CD4-positive, alpha-beta T cell (primary cell): ENCODE measurements at regions of chr11 and their contacts with region 1.

Region 1: DNA sequence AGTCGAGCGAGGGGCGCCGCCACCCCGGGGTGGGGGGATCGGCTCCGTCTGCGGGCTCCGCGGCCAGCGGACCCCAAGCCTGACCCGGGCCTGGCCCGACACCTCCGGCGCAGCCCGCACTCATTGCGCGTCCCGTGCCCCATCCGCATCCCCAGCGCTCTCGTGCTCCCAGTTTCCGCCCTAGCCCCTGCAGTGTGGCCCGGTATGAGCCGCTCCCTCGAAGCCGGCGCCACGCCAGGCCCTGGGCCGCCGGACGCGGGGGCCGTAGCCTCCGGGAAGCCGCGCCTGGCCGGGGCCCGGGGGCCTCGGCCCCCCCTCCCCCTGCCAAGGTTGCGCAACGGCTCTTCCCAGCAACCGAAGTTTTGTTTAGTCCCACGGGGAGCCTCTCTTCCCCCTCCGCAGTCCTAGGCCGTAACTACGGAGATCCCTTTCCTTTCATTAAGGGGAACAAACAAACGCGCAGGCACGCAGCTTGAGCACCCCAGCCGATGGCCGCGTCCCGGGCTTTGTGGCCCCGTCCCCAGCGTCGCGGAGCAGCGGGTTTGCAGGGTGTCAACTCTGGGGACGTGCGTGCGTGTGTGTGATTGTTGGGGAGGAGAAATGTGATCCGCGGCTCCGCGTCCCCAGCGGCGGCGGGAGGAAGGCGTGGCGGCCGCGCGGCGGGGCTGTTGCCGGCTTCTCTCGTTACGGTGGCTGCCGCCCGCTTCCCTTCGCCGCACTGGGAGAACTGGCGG is 883 bp downstream of the HIPK3 start:
- DNase-seq: peak; percentile 58 to 89 (median 71)
- ATAC-seq: peak; percentile 68
- H3K4me3 ChIP-seq: peak overlapping the region; percentile 88
- H3K4me3 Mint-ChIP-seq: peak overlapping the region; percentile 97
- H3K27ac ChIP-seq: peak overlapping the region; percentile 94 to 97
- H3K27ac Mint-ChIP-seq: peak overlapping the region; percentile 94
- H3K4me1 ChIP-seq: peaks cover 15% of the 10 kb centered on the region
- H3K4me1 Mint-ChIP-seq: peaks cover 55% of the 10 kb centered on the region
- H3K27me3 ChIP-seq: no peaks in the 10 kb centered on the region
- H3K27me3 Mint-ChIP-seq: no peaks in the 10 kb centered on the region
- CTCF ChIP-seq: no peak

Region 2: GRCh38 chr11:32583459-32584271 is 674.4 kb before region 1 on chr11 and contains the start of gene EIF3M:
- CTCF ChIA-PET with region 1: no interaction called
- POLR2A ChIA-PET with region 1: interaction called, 3 read pairs
- intact Hi-C with region 1: loop called in 1 of 2 experiments (anchors 5 kb)
- DNase-seq: peak; percentile 92 to 98 (median 95)
- ATAC-seq: peak; percentile 98
- H3K4me3 ChIP-seq: peak within 1 kb of the TSS; percentile 89
- H3K4me3 Mint-ChIP-seq: peak within 1 kb of the TSS; percentile 94
- H3K27ac ChIP-seq: peak within 1 kb of the TSS; percentile 84 to 87
- H3K27ac Mint-ChIP-seq: peak within 1 kb of the TSS; percentile 94
- H3K4me1 ChIP-seq: peaks cover 38% of the 10 kb centered on the region
- H3K4me1 Mint-ChIP-seq: peaks cover 52% of the 10 kb centered on the region
- H3K27me3 ChIP-seq: no peaks in the 10 kb centered on the region
- H3K27me3 Mint-ChIP-seq: no peaks in the 10 kb centered on the region
- CTCF ChIP-seq: no peak
- total RNA-seq, gene EIF3M: 260 to 264 TPM

Region 3: GRCh38 chr11:33273656-33274055 is 15.6 kb after region 1 on chr11:
- CTCF ChIA-PET with region 1: interaction called, 5 read pairs
- POLR2A ChIA-PET with region 1: interaction called, 3 read pairs
- intact Hi-C with region 1: loop called in 1 of 2 experiments (anchors 2 kb)
- DNase-seq: no peak
- ATAC-seq: no peak
- H3K4me3 ChIP-seq: no peak overlapping the region
- H3K4me3 Mint-ChIP-seq: no peak overlapping the region
- H3K27ac ChIP-seq: no peak overlapping the region
- H3K27ac Mint-ChIP-seq: no peak overlapping the region
- H3K4me1 ChIP-seq: peaks cover 17% of the 10 kb centered on the region
- H3K4me1 Mint-ChIP-seq: peaks cover 65% of the 10 kb centered on the region
- H3K27me3 ChIP-seq: no peaks in the 10 kb centered on the region
- H3K27me3 Mint-ChIP-seq: no peaks in the 10 kb centered on the region
- CTCF ChIP-seq: no peak

Region 4: DNA sequence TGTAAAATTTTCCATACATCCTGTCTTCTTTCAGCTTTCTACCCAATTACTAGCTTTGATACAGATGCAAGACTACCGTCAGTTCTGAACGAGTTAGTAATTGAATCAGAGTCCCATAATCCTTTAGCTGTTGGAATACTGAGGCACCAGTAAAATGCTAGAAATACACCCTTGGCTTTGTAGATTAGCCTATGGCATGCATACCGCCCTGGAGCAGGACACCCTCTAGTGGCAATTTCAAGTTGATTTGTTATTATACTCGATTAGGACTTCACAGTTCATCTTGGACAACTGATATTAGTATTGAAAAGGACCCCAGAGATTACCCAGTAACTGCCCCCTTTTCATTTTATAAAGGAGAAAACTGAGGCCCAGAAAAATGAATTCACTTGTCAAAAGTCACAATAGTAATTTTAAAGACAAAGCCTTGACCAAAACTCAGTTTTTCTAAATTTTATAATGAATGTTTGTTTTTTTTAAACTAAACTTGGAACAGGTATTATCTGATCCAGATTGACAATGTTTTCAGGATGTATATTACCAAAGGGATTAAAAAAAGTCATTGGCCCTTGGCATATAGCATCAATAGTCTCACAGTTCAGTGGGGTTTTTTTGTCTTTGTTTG is 71.8 kb after region 1 on chr11:
- CTCF ChIA-PET with region 1: no interaction called
- POLR2A ChIA-PET with region 1: no interaction called
- intact Hi-C with region 1: loop called (anchors 1 to 5 kb)
- DNase-seq: peak in 13 of 14 experiments; percentile 12 to 75 (median 38)
- ATAC-seq: peak; percentile 78
- H3K4me3 ChIP-seq: no peak overlapping the region
- H3K4me3 Mint-ChIP-seq: no peak overlapping the region
- H3K27ac ChIP-seq: no peak overlapping the region
- H3K27ac Mint-ChIP-seq: peak overlapping the region; percentile 5
- H3K4me1 ChIP-seq: no peaks in the 10 kb centered on the region
- H3K4me1 Mint-ChIP-seq: peaks cover 35% of the 10 kb centered on the region
- H3K27me3 ChIP-seq: no peaks in the 10 kb centered on the region
- H3K27me3 Mint-ChIP-seq: no peaks in the 10 kb centered on the region
- CTCF ChIP-seq: peak; percentile 73

Region 5: DNA sequence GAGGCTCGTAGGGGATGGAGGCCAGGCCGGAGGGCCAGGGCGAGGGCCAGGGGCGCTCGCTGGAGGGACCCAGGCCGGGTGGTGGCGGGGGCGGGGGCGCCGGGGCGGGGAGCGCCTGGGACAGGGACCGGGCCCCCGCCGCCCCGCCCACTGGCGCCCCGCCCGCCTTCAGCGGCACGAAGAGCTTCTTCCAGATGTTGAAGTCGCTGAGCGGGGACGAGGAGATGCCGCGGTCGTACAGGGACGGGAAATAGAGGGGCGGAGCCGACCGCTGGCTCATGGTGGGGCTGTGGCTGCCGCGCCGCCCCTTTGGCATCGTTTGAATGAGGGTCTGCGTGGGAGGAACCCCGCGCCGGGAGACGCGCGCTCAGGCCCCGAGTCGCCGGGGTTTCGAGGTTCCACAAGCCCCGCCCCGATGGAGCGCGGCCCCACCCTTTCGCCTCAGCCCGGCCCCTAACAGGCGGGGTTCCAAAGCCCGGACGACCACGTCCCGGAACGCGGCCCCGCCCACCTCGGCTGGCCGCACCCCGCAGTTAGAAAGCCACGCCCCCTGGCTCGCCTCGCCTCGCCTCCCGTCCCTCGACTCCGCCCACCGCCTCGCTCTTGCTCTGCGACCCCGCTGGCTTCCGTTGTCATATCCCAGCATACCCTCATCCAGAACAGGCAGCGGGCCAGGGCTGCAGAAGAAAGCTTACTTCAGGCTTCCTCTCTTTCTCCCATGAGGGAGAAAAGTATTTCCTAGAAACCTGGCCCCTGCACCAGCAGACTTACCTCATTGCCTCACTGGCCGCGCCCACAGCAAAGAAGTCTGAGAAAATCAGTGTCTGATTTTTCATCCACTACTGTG is 442.6 kb after region 1 on chr11 and contains the start of gene C11orf91:
- CTCF ChIA-PET with region 1: no interaction called
- POLR2A ChIA-PET with region 1: no interaction called
- intact Hi-C with region 1: loop called in 1 of 2 experiments (anchors 2 kb)
- DNase-seq: peak; percentile 84 to 98 (median 94)
- ATAC-seq: peak; percentile 93
- H3K4me3 ChIP-seq: peak within 1 kb of the TSS; percentile 68
- H3K4me3 Mint-ChIP-seq: peak within 1 kb of the TSS; percentile 95
- H3K27ac ChIP-seq: no peak within 1 kb of the TSS
- H3K27ac Mint-ChIP-seq: peak within 1 kb of the TSS; percentile 64
- H3K4me1 ChIP-seq: peaks cover 14% of the 10 kb centered on the region
- H3K4me1 Mint-ChIP-seq: peaks cover 33% of the 10 kb centered on the region
- H3K27me3 ChIP-seq: no peaks in the 10 kb centered on the region
- H3K27me3 Mint-ChIP-seq: peaks cover 10% of the 10 kb centered on the region
- CTCF ChIP-seq: no peak
- total RNA-seq, gene C11orf91: 0.45 TPM in 1 of 2 experiments, not detected in the other

Region 6: GRCh38 chr11:33736148-33736809 is 478.2 kb after region 1 on chr11 and contains the start of gene CD59:
- CTCF ChIA-PET with region 1: no interaction called
- POLR2A ChIA-PET with region 1: interaction called, 5 read pairs
- intact Hi-C with region 1: loop called in 1 of 2 experiments (anchors 10 kb)
- DNase-seq: peak; percentile 79 to 98 (median 90)
- ATAC-seq: peak; percentile 85
- H3K4me3 ChIP-seq: peak within 1 kb of the TSS; percentile 64
- H3K4me3 Mint-ChIP-seq: peak within 1 kb of the TSS; percentile 94
- H3K27ac ChIP-seq: peak within 1 kb of the TSS; percentile 20 to 52
- H3K27ac Mint-ChIP-seq: peak within 1 kb of the TSS; percentile 81
- H3K4me1 ChIP-seq: peaks cover 31% of the 10 kb centered on the region
- H3K4me1 Mint-ChIP-seq: peaks cover 43% of the 10 kb centered on the region
- H3K27me3 ChIP-seq: no peaks in the 10 kb centered on the region
- H3K27me3 Mint-ChIP-seq: no peaks in the 10 kb centered on the region
- CTCF ChIP-seq: no peak
- total RNA-seq, gene CD59: 35.2 to 37.8 TPM

Region 7: GRCh38 chr11:33891714-33892327 is 633.8 kb after region 1 on chr11 and contains the start of gene LMO2:
- CTCF ChIA-PET with region 1: no interaction called
- POLR2A ChIA-PET with region 1: no interaction called
- intact Hi-C with region 1: no loop called
- DNase-seq: no peak
- ATAC-seq: no peak
- H3K4me3 ChIP-seq: no peak within 1 kb of the TSS
- H3K4me3 Mint-ChIP-seq: no peak within 1 kb of the TSS
- H3K27ac ChIP-seq: no peak within 1 kb of the TSS
- H3K27ac Mint-ChIP-seq: no peak within 1 kb of the TSS
- H3K4me1 ChIP-seq: peaks cover 31% of the 10 kb centered on the region
- H3K4me1 Mint-ChIP-seq: peaks cover 28% of the 10 kb centered on the region
- H3K27me3 ChIP-seq: peaks cover 34 to 46% of the 10 kb centered on the region in 2 experiments
- H3K27me3 Mint-ChIP-seq: peaks cover 79% of the 10 kb centered on the region
- CTCF ChIP-seq: no peak
- total RNA-seq, gene LMO2: 0.61 to 0.80 TPM